H1 (cell line): ENCODE measurements at regions of chr19 and their contacts with region 1.

Region 1: DNA sequence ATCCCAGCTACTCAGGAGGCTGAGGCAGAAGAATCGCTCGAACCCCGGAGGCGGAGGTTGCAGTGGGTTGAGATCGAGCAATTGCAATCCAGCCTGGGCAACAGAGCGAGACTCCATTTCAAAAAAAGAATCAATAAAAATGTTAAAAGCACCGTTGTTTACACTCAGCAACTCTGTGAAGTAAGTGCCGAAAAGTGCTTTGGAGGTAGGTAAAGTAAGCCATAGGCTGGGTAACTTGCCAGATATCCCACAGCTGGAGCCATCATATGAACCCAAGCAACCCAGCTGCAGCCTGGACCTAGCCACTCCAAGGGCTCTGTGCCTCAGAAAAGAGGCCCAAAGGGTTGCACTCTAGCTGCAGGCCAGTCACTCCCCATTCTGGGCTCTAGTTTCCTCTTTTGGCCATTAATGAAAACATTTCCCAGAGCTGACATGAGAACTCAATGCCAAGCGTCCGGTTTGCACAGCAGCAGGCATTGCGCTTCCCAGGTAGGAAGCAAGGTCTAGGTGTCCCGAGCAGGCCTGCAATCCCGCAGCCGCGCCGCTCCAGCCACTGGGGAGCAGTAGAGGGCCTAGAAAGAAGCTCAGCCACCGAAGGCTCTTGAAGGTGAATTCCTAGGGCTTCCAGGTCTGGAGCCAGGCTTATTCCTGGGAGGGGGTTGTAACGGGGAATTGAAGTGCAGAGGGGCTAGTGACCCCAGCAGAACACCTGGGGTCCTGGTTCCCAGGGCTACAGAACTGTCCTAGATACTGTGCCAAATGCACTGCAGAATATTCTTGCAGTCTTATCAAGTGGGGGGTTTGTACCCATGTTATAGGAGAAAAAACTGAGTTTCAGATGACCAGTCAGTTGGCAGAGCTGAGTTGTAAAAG is 4.1 kb upstream of the CD79A start:
- DNase-seq: peak; percentile 68 to 92
- H3K4me3 ChIP-seq: no peak overlapping the region
- H3K27ac ChIP-seq: no peak overlapping the region
- H3K4me1 ChIP-seq: peaks cover 0 to 2% (median under 1%) of the 10 kb centered on the region in 4 experiments; a peak in 3 of 7 replicates
- H3K27me3 ChIP-seq: no peaks in the 10 kb centered on the region
- CTCF ChIP-seq: peak; percentile 87 to 91 (median 90)
- EP300 ChIP-seq: no peak
- POLR2A ChIP-seq: peak; percentile 77; a peak in 2 of 3 replicates
- RAD21 ChIP-seq: peak; percentile 86 to 90

Region 2: GRCh38 chr19:41668315-41668714 is 204.7 kb before region 1 on chr19:
- CTCF ChIA-PET with region 1: no interaction called
- POLR2A ChIA-PET with region 1: no interaction called
- DNase-seq: no peak
- H3K4me3 ChIP-seq: no peak overlapping the region
- H3K27ac ChIP-seq: no peak overlapping the region
- H3K4me1 ChIP-seq: no peaks in the 10 kb centered on the region
- H3K27me3 ChIP-seq: no peaks in the 10 kb centered on the region
- CTCF ChIP-seq: no peak
- EP300 ChIP-seq: no peak
- POLR2A ChIP-seq: no peak
- RAD21 ChIP-seq: no peak

Region 3: DNA sequence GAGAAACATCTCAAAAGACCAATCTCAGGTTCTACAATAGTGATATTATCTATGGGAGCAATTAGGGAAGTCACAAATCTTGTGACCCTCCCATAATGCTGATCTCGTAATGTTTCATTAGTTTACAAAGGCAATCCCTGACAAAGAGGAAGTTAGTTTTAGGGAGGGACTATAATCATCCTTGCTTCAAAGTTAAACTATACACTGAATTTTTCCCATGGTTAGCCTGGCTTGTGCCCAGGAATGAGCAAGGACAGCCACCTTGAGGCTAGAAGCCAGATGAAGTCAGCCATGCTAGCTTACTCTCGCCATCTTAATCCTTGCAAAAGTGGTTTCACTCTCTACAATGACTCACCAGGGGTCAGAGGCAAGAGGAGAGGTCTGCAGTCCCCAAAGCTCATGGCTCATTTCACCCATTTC is 71.2 kb before region 1 on chr19:
- CTCF ChIA-PET with region 1: no interaction called
- POLR2A ChIA-PET with region 1: no interaction called
- DNase-seq: no peak
- H3K4me3 ChIP-seq: no peak overlapping the region
- H3K27ac ChIP-seq: no peak overlapping the region
- H3K4me1 ChIP-seq: no peaks in the 10 kb centered on the region
- H3K27me3 ChIP-seq: no peaks in the 10 kb centered on the region
- CTCF ChIP-seq: no peak
- EP300 ChIP-seq: no peak
- POLR2A ChIP-seq: no peak
- RAD21 ChIP-seq: no peak

Region 4: DNA sequence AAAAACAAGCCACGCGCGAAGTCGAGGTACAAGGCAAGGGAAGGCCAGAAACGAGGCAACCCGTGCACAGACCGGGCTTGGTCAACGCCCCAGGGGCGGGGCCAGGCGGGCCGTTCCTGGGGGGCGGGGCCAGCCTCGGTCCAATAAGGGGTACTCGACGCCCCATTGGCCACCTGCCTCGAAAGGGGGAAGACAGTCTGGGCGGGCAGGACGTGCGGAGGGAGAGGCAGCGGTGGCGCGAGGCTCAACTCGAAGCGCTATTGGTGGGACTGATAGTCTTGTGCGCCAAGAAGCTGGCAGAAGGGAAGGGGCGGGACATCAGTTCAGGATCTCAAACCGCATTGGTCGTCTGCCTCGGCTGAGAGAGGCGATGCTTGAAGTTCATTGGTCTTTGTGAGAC is 28.4 kb before region 1 on chr19 and contains the start of gene LYPD4:
- CTCF ChIA-PET with region 1: no interaction called
- POLR2A ChIA-PET with region 1: no interaction called
- DNase-seq: no peak
- H3K4me3 ChIP-seq: no peak within 1 kb of the TSS
- H3K27ac ChIP-seq: no peak within 1 kb of the TSS
- H3K4me1 ChIP-seq: no peaks in the 10 kb centered on the region; a peak in 1 of 7 replicates
- H3K27me3 ChIP-seq: no peaks in the 10 kb centered on the region; a peak in 1 of 7 replicates
- CTCF ChIP-seq: no peak
- EP300 ChIP-seq: no peak
- POLR2A ChIP-seq: no peak
- RAD21 ChIP-seq: no peak
- total RNA-seq, gene LYPD4: not detected in 2 replicates

Region 5: DNA sequence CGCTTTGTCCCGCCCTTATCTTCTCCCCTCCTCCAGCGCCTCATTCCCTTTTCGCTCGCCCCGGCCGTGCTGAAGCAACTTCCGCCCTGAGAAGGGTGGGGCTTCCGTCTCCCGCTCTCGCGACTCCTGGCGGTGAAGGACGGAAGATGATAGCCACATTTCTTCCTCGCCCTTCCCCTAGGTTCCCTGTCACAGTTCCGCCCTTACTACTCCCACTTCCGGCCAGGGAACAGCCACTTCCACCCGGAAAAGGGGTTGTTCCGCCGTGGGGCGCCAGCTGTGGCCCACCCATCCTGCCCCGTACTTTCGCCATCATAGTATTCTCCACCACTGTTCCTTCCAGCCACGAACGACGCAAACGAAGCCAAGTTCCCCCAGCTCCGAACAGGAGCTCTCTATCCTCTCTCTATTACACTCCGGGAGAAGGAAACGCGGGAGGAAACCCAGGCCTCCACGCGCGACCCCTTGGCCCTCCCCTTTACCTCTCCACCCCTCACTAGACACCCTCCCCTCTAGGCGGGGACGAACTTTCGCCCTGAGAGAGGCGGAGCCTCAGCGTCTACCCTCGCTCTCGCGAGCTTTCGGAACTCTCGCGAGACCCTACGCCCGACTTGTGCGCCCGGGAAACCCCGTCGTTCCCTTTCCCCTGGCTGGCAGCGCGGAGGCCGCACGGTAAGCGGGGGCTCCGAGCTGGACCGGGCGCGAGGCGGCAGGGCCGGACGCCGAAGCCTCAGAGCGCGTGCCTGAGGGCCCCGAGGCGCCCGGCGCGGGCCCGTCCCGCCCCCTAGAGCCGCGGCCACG is 13.2 kb before region 1 on chr19 and contains the start of gene RPS19:
- CTCF ChIA-PET with region 1: interaction called, 13 read pairs
- POLR2A ChIA-PET with region 1: interaction called, 200 read pairs
- DNase-seq: peak; percentile 98 to 99
- H3K4me3 ChIP-seq: peak within 1 kb of the TSS; percentile 81 to 99 (median 96)
- H3K27ac ChIP-seq: peak within 1 kb of the TSS; percentile 95
- H3K4me1 ChIP-seq: peaks cover 3 to 26% (median 14%) of the 10 kb centered on the region in 4 experiments
- H3K27me3 ChIP-seq: no peaks in the 10 kb centered on the region
- CTCF ChIP-seq: peak; percentile 45 to 76 (median 54)
- EP300 ChIP-seq: no peak
- POLR2A ChIP-seq: peak; percentile 92 to 96
- RAD21 ChIP-seq: no peak
- total RNA-seq, gene RPS19: 2,817 and 2,831 TPM in 2 replicates

Region 6: GRCh38 chr19:41893899-41894298 is 20.9 kb after region 1 on chr19:
- CTCF ChIA-PET with region 1: interaction called, 9 read pairs
- POLR2A ChIA-PET with region 1: interaction called, 298 read pairs
- DNase-seq: no peak
- H3K4me3 ChIP-seq: no peak overlapping the region
- H3K27ac ChIP-seq: no peak overlapping the region
- H3K4me1 ChIP-seq: peaks cover 0 to 5% (median 1%) of the 10 kb centered on the region in 4 experiments; a peak in 1 of 7 replicates
- H3K27me3 ChIP-seq: no peaks in the 10 kb centered on the region
- CTCF ChIP-seq: peak; percentile 10 to 53 (median 45); a peak in 3 of 4 replicates
- EP300 ChIP-seq: no peak
- POLR2A ChIP-seq: no peak
- RAD21 ChIP-seq: no peak; a peak in 1 of 4 replicates

Region 7: DNA sequence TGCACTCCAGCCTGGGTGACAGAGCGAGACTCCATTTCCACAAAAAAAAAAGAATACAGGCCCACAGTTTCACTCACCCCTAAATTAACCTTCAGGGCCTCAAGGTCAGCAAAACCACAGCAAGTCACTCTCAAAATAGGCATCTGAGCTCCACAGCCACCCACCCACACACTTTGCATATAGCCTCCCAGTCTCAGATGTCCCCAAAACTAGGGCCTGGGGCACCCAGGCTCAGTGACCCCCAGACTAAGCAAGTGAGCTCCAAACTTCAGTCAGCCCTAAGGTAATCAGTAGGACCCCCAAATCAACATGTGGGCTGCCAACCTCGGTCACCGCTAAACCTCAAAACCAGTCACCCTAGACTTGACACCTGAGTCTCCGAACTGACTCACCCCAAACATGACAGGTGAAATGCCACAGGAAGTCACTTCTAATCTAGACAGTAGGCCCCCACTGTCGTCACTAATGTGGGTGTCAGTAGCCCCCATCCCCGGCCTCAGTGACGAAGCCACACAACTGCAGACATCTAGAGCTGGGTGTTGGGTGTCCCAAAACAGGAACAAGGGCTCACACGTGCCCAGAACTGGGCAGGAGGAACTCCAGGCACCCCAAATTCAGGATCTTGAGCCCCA is 72.2 kb after region 1 on chr19:
- CTCF ChIA-PET with region 1: interaction called, 30 read pairs
- POLR2A ChIA-PET with region 1: interaction called, 28 read pairs
- DNase-seq: no peak
- H3K4me3 ChIP-seq: no peak overlapping the region
- H3K27ac ChIP-seq: no peak overlapping the region
- H3K4me1 ChIP-seq: no peaks in the 10 kb centered on the region; a peak in 1 of 7 replicates
- H3K27me3 ChIP-seq: peaks cover 9 to 16% (median 15%) of the 10 kb centered on the region in 4 experiments; a peak in 6 of 7 replicates
- CTCF ChIP-seq: no peak
- EP300 ChIP-seq: no peak
- POLR2A ChIP-seq: no peak
- RAD21 ChIP-seq: no peak

Region 8: GRCh38 chr19:41959056-41960053 is 86.3 kb after region 1 on chr19 and contains the start of gene RABAC1:
- CTCF ChIA-PET with region 1: interaction called, 33 read pairs
- POLR2A ChIA-PET with region 1: interaction called, 54 read pairs
- DNase-seq: peak; percentile 79 to 94
- H3K4me3 ChIP-seq: peak within 1 kb of the TSS; percentile 81 to 92 (median 86)
- H3K27ac ChIP-seq: peak within 1 kb of the TSS; percentile 77; the same call in 1 of the 2 replicates
- H3K4me1 ChIP-seq: peaks cover 3 to 10% (median 6%) of the 10 kb centered on the region in 4 experiments
- H3K27me3 ChIP-seq: no peaks in the 10 kb centered on the region
- CTCF ChIP-seq: peak in 2 of 3 experiments; percentile 25 to 36; a peak in 3 of 4 replicates
- EP300 ChIP-seq: no peak
- POLR2A ChIP-seq: peak in 1 of 2 experiments; percentile 75; a peak in 1 of 3 replicates
- RAD21 ChIP-seq: no peak
- total RNA-seq, gene RABAC1: 123 and 124 TPM in 2 replicates